ENCODE measurements at regions of chr11 and their contacts with region 1.

Region 1: GRCh38 chr11:45563810-45564209 is 101.6 kb downstream of the CHST1 start:
- DNase-seq: no peak

Region 2: GRCh38 chr11:45590743-45591142 is 26.9 kb after region 1 on chr11:
- intact Hi-C with region 1: loop called in 1 of 2 experiments (anchors 1 kb)
- DNase-seq: peak; percentile 84

Region 3: GRCh38 chr11:45771566-45772448 is 208.0 kb after region 1 on chr11:
- intact Hi-C with region 1: no loop called
- DNase-seq: peak; percentile 95